Activated T-helper 2 cell treated with anti-CD3 and anti-CD28 coated beads, Interferon-gamma antibody, Interleukin-2, Interleukin-4, amounts not matched to agents 10 μg/mL and 5 μg/mL and 100 μg/mL, durations not matched to agents 14 hours and 24 hours and 36 hours (primary cell): ENCODE measurements at regions of chr13 and their contacts with region 1.

Region 1: DNA sequence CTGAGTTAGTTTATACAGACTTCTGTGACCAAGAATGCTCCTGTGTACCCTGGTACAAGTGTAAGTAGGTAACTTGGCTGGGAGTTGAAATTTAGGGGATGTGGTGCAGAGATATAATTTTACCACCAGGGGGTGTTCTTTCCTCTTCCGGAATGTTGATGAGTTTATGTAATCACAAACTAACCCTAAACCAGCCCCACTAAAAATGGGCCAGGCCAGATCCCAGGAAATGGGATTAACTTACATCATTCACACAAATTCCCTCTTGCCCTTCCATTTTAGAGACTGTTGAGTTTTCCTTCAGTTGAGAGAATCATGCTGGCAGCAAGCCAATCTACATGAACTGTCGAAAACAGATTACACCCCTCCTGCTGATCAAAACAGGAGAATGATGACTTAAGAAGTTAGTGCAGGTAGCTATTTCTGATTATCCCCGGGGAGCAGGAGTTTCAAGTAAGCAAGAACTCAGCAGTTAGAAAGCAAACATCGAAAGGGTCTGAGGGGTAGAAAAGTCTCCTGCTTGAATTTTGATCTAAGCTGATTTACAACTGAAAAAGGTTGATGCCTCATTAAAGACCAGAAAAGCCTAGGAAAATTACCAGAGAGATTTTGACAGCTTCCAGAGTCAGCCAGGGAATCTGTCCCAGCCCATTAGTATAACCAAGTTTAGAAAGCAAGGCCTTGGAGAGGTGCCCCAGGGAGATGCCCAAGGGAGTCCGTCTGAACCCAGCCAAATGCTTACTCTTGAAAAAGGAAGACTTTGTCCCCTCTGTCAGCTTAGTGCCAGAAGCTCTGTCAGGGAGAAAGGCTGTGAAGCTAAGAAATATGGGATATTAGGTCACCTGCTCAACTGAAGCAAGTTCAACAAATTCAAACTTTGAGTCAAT is 32.3 kb upstream of the MED4 start:
- DNase-seq: peak; percentile 14
- H3K4me3 Mint-ChIP-seq: no peak overlapping the region
- H3K27ac Mint-ChIP-seq: no peak overlapping the region
- H3K4me1 Mint-ChIP-seq: peaks cover 9% of the 10 kb centered on the region
- H3K27me3 Mint-ChIP-seq: peaks cover 10% of the 10 kb centered on the region

Region 2: GRCh38 chr13:47890146-47890814 is 236.9 kb before region 1 on chr13:
- intact Hi-C with region 1: no loop called
- DNase-seq: no peak
- H3K4me3 Mint-ChIP-seq: no peak overlapping the region
- H3K27ac Mint-ChIP-seq: no peak overlapping the region
- H3K4me1 Mint-ChIP-seq: peaks cover 21% of the 10 kb centered on the region
- H3K27me3 Mint-ChIP-seq: no peaks in the 10 kb centered on the region

Region 3: DNA sequence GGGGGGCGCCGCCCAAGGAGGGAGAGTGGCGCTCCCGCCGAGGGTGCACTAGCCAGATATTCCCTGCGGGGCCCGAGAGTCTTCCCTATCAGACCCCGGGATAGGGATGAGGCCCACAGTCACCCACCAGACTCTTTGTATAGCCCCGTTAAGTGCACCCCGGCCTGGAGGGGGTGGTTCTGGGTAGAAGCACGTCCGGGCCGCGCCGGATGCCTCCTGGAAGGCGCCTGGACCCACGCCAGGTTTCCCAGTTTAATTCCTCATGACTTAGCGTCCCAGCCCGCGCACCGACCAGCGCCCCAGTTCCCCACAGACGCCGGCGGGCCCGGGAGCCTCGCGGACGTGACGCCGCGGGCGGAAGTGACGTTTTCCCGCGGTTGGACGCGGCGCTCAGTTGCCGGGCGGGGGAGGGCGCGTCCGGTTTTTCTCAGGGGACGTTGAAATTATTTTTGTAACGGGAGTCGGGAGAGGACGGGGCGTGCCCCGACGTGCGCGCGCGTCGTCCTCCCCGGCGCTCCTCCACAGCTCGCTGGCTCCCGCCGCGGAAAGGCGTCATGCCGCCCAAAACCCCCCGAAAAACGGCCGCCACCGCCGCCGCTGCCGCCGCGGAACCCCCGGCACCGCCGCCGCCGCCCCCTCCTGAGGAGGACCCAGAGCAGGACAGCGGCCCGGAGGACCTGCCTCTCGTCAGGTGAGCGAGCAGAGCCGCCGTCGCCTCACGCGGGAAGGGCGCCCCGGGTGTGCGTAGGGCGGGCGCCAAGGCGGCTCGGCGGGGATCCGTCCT is 176.4 kb after region 1 on chr13 and contains the start of gene RB1:
- intact Hi-C with region 1: loop called (anchors 2 kb)
- DNase-seq: peak; percentile 89
- H3K4me3 Mint-ChIP-seq: peak within 1 kb of the TSS; percentile 99
- H3K27ac Mint-ChIP-seq: peak within 1 kb of the TSS; percentile 97
- H3K4me1 Mint-ChIP-seq: peaks cover 27% of the 10 kb centered on the region
- H3K27me3 Mint-ChIP-seq: no peaks in the 10 kb centered on the region
- total RNA-seq, gene RB1: 27.1 and 28.0 TPM in 2 replicates